Activated T-helper 2 cell treated with anti-CD3 and anti-CD28 coated beads, Interferon-gamma antibody, Interleukin-2, Interleukin-4, amounts not matched to agents 10 μg/mL and 5 μg/mL and 100 μg/mL, durations not matched to agents 14 hours and 24 hours and 36 hours (primary cell): ENCODE measurements at regions of chr12 and their contacts with region 1.

Region 1: DNA sequence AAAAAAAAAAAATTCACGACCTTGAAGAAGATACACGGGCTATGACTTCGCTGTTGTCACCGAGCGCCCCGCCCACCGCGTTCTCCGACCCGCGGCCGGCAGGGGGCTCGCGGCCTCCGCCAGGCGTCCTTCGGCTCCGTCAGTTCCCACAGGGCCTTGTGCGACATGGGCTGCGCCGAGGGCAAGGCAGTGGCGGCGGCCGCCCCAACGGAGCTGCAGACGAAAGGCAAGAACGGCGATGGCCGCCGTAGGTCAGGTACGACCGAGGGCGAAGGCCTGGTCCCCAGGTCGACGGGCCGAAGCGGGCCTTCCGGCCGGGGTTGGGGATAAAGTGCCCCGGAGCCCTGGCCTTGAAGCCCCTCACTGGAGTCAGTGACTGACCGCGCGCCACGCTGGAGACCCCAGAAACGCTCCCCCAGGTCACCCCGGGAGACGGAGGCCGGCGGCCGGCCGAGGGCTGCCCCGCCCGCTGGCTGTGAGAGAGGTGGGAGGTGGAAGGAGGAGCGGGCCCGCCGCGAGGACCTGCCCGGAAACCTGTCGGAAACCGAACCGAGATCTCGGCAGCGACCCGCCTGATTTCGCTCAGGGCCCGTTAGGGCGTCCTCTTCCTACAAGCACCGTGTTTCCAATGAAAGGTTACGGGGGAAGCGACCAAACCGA is at the start of gene TXNRD1:
- DNase-seq: peak; percentile 78
- H3K4me3 Mint-ChIP-seq: peak within 1 kb of the TSS; percentile 72
- H3K27ac Mint-ChIP-seq: peak within 1 kb of the TSS; percentile 61
- H3K4me1 Mint-ChIP-seq: peaks cover 31% of the 10 kb centered on the region
- H3K27me3 Mint-ChIP-seq: no peaks in the 10 kb centered on the region
- total RNA-seq, gene TXNRD1: 83.7 and 96.4 TPM in 2 replicates

Region 2: GRCh38 chr12:104083769-104084475 is 131.8 kb before region 1 on chr12:
- intact Hi-C with region 1: loop called (anchors 1 kb)
- DNase-seq: no peak
- H3K4me3 Mint-ChIP-seq: peak overlapping the region; percentile 13
- H3K27ac Mint-ChIP-seq: peak overlapping the region; percentile 65
- H3K4me1 Mint-ChIP-seq: peaks cover 19% of the 10 kb centered on the region
- H3K27me3 Mint-ChIP-seq: no peaks in the 10 kb centered on the region

Region 3: GRCh38 chr12:104137913-104138796 is 77.6 kb before region 1 on chr12 and contains the start of gene NFYB:
- intact Hi-C with region 1: loop called (anchors 1 kb)
- DNase-seq: peak; percentile 91
- H3K4me3 Mint-ChIP-seq: peak within 1 kb of the TSS; percentile 84
- H3K27ac Mint-ChIP-seq: peak within 1 kb of the TSS; percentile 86
- H3K4me1 Mint-ChIP-seq: peaks cover 17% of the 10 kb centered on the region
- H3K27me3 Mint-ChIP-seq: peaks cover 14% of the 10 kb centered on the region
- total RNA-seq, gene NFYB: 29.0 and 30.0 TPM in 2 replicates

Region 4: GRCh38 chr12:104177663-104178501 is 37.9 kb before region 1 on chr12:
- intact Hi-C with region 1: loop called (anchors 1 kb)
- DNase-seq: no peak
- H3K4me3 Mint-ChIP-seq: no peak overlapping the region
- H3K27ac Mint-ChIP-seq: peak overlapping the region; percentile 54
- H3K4me1 Mint-ChIP-seq: peaks cover 14% of the 10 kb centered on the region
- H3K27me3 Mint-ChIP-seq: no peaks in the 10 kb centered on the region

Region 5: GRCh38 chr12:104248444-104248843 is 32.7 kb after region 1 on chr12:
- intact Hi-C with region 1: no loop called
- DNase-seq: no peak
- H3K4me3 Mint-ChIP-seq: no peak overlapping the region
- H3K27ac Mint-ChIP-seq: no peak overlapping the region
- H3K4me1 Mint-ChIP-seq: no peaks in the 10 kb centered on the region
- H3K27me3 Mint-ChIP-seq: peaks cover 6% of the 10 kb centered on the region

Region 6: DNA sequence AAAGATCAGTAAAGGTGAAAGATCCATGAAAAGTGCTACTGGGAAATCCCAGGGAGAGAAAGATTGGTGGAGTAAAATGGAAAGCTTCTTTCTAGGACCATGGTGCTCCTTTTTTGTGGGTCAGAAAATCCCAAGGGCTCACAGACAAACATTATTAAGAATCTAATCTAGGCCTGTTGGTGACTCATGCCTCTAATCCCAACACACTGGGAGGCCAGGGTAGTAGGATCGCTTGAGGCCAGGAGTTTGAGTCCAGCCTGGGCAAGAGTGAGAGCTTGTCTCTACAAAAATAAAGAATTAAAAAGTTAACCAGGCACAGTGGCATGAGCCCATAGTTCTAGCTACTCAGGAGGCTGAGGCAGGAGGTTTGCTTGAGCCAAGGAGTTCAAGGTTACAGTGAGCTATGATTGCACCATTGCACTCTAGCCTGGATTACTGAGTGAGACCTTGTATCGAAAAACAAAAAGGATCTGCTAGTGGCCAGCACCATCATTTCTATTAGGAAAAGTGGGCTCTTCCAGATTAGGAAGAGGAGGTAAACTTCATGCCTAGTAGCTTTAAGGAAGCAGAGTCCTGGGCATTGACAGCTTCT is 42.8 kb after region 1 on chr12:
- intact Hi-C with region 1: loop called (anchors 5 kb)
- DNase-seq: no peak
- H3K4me3 Mint-ChIP-seq: no peak overlapping the region
- H3K27ac Mint-ChIP-seq: no peak overlapping the region
- H3K4me1 Mint-ChIP-seq: no peaks in the 10 kb centered on the region
- H3K27me3 Mint-ChIP-seq: peaks cover 3% of the 10 kb centered on the region

Region 7: GRCh38 chr12:104303538-104304151 is 87.9 kb after region 1 on chr12 and contains the start of gene EID3:
- intact Hi-C with region 1: loop called (anchors 1 kb)
- DNase-seq: peak; percentile 91
- H3K4me3 Mint-ChIP-seq: peak within 1 kb of the TSS; percentile 90
- H3K27ac Mint-ChIP-seq: peak within 1 kb of the TSS; percentile 99
- H3K4me1 Mint-ChIP-seq: peaks cover 62% of the 10 kb centered on the region
- H3K27me3 Mint-ChIP-seq: no peaks in the 10 kb centered on the region
- total RNA-seq, gene EID3: 9.4 and 10.1 TPM in 2 replicates

Region 8: DNA sequence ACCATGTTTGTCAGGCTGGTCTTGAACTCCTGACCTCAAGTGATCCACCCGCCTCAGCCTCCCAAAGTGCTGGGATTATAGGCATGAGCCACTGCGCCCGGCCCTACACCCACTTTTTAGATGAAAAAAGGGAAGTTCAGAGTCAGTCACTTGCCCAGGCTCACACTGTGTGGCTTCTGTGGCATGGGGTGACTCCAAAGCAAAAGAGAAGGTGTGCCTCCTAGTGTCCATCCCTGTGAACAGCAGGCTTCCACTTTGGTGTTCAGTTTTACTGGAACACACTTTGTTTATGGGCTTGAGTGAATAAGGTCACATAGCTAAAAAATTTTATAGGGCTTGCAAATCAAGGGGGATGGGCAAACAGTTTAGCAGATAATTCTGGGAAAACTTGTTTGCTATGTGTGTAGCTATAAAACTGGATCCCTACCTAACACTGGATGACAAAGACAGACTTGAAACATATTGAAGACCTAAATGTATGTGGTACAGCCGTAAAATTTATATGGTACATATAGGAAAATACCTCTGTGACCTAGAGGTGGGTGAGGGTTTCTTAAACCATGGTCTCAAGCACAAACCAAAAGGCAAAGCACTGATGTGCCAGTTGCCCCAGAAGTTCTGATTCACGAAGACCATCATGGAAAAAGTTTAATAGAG is 142.7 kb after region 1 on chr12:
- intact Hi-C with region 1: loop called (anchors 5 kb)
- DNase-seq: peak; percentile 60
- H3K4me3 Mint-ChIP-seq: no peak overlapping the region
- H3K27ac Mint-ChIP-seq: no peak overlapping the region
- H3K4me1 Mint-ChIP-seq: peaks cover 8% of the 10 kb centered on the region
- H3K27me3 Mint-ChIP-seq: no peaks in the 10 kb centered on the region